B cell (primary cell): ENCODE measurements at regions of chr15 and their contacts with region 1.

Region 1: GRCh38 chr15:59688841-59689625 is at the start of gene BNIP2:
- DNase-seq: peak; percentile 99
- ATAC-seq: peak; percentile 89
- H3K4me3 ChIP-seq: peak within 1 kb of the TSS; percentile 66 to 99 (median 97)
- H3K4me3 Mint-ChIP-seq: peak within 1 kb of the TSS; percentile 89
- H3K27ac ChIP-seq: peak within 1 kb of the TSS; percentile 93 to 98
- H3K27ac Mint-ChIP-seq: peak within 1 kb of the TSS; percentile 98
- H3K4me1 ChIP-seq: peaks cover 43% of the 10 kb centered on the region in 2 donors
- H3K4me1 Mint-ChIP-seq: peaks cover 48% of the 10 kb centered on the region
- H3K27me3 ChIP-seq: no peaks in the 10 kb centered on the region
- H3K27me3 Mint-ChIP-seq: no peaks in the 10 kb centered on the region
- CTCF ChIP-seq: no peak
- total RNA-seq, gene BNIP2: 91.2 and 112 TPM in 2 replicates

Region 2: DNA sequence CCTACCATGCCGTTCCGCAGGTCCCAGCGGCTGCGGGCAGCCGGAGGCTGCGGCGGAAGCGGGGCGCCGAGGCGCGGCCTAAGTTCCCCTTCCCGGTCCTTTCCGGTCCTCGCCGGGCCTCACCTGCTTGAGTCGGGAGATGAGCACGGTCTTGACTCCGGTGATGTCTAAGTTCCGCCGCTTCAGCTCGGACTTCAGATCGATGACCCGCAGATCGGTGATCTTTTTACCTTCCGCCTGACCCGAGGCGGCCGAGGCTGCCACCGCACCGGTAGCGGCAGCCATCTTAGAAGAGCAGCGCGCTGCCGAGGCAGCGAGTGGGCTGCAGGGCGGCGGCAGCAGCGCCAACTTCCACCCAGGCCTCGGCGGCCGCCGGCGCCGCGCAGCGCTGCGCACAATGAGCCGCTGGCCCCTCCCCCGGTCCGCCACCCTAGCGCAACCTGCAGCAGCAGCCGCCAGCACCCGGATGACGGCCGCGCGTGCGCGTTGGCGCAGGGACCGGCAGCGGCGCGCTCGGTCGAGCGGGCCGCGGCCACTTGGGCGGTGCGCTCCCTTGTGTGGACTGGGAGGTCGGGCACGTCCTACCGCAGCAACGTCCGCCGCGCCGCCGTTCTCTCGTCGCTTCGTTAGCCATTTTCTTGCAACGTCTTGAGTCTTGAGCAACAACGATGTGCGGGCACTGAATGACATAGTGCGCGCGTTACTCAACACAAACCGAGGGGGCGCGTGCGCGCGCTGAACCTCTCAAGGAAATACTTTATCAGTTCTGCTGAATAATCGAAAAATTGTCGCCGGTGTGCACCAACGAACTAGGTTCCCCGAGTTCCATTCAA is 755.5 kb before region 1 on chr15 and contains the start of gene SLTM:
- CTCF ChIA-PET with region 1: no interaction called
- POLR2A ChIA-PET with region 1: no interaction called
- intact Hi-C with region 1: loop called (anchors 2 kb)
- DNase-seq: peak; percentile 98
- ATAC-seq: peak; percentile 91
- H3K4me3 ChIP-seq: peak within 1 kb of the TSS; percentile 80 to 97 (median 90)
- H3K4me3 Mint-ChIP-seq: peak within 1 kb of the TSS; percentile 95
- H3K27ac ChIP-seq: peak within 1 kb of the TSS; percentile 97 to 98
- H3K27ac Mint-ChIP-seq: peak within 1 kb of the TSS; percentile 97
- H3K4me1 ChIP-seq: peaks cover 19 to 20% of the 10 kb centered on the region in 2 donors
- H3K4me1 Mint-ChIP-seq: peaks cover 29% of the 10 kb centered on the region
- H3K27me3 ChIP-seq: no peaks in the 10 kb centered on the region
- H3K27me3 Mint-ChIP-seq: no peaks in the 10 kb centered on the region
- CTCF ChIP-seq: peak; percentile 42
- total RNA-seq, gene SLTM: 183 and 188 TPM in 2 replicates

Region 3: DNA sequence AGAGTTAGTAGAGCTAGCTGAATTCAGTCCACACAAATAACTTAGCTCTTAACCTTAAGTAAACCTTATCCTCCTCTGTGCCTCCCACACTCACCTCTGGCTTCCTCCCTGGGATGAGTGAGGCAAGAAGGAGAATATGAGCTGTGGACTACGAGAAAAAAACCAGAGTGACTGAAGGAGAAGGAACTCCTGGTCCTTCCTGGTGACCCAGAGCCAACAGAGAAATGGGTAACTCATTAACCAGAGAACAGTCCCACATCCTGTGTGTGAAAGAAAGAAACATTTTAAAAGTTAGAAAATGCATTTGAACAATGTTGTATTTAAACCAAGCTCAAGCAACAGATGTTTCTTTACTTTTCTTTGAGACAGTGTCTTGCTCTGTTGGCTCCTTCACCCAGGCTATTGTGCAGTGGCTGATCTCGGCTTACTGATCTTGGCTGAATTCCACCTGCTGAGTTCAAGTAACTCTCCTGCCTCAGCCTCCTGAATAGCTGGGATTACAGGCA is 278.6 kb before region 1 on chr15:
- CTCF ChIA-PET with region 1: no interaction called
- POLR2A ChIA-PET with region 1: no interaction called
- intact Hi-C with region 1: no loop called
- DNase-seq: no peak
- ATAC-seq: no peak
- H3K4me3 ChIP-seq: no peak overlapping the region
- H3K4me3 Mint-ChIP-seq: peak overlapping the region; percentile 45
- H3K27ac ChIP-seq: peak overlapping the region; percentile 74 to 85
- H3K27ac Mint-ChIP-seq: peak overlapping the region; percentile 78
- H3K4me1 ChIP-seq: peaks cover 83 to 87% of the 10 kb centered on the region in 2 donors
- H3K4me1 Mint-ChIP-seq: peaks cover 81% of the 10 kb centered on the region
- H3K27me3 ChIP-seq: no peaks in the 10 kb centered on the region
- H3K27me3 Mint-ChIP-seq: no peaks in the 10 kb centered on the region
- CTCF ChIP-seq: no peak

Region 4: GRCh38 chr15:59473226-59473625 is 215.8 kb before region 1 on chr15:
- CTCF ChIA-PET with region 1: no interaction called
- POLR2A ChIA-PET with region 1: no interaction called
- intact Hi-C with region 1: no loop called
- DNase-seq: no peak
- ATAC-seq: no peak
- H3K4me3 ChIP-seq: no peak overlapping the region
- H3K4me3 Mint-ChIP-seq: no peak overlapping the region
- H3K27ac ChIP-seq: no peak overlapping the region
- H3K27ac Mint-ChIP-seq: no peak overlapping the region
- H3K4me1 ChIP-seq: no peaks in the 10 kb centered on the region
- H3K4me1 Mint-ChIP-seq: peaks cover 10% of the 10 kb centered on the region
- H3K27me3 ChIP-seq: no peaks in the 10 kb centered on the region
- H3K27me3 Mint-ChIP-seq: no peaks in the 10 kb centered on the region
- CTCF ChIP-seq: no peak

Region 5: DNA sequence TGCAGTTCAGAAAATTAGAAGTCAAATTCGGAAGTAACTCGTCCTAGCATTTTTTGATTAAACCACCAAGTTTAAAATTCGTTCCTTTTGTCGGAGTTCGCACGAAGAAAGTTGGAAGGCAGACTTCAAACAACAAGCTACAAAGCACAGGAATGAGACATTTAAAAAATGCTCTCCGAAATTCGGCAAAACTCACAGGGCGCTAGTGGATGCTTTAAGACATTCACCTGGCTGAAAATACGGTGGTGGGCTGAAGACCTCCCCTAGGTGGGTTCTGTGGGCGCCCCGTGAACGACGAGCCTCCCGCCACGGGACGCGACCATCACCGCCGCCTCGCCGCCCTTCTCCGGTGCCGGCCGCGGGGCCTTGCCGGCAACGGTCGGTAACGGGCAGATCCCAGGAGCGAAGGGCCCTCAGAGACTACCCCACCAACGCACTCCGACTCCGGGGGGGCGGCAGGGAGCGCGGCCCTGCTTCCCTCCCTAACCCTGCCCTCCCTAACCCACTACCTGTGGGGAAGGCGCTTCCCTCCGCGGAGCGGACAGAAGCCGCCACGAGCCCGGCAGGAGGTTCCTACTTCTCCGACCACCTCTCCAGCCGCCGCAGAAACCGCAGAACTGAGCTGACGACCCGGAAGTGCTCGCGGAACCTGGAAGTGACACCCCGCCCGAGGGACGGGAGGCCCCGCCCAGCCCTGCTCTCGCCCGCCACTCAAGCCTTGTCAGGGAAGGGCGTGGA is 32.0 kb before region 1 on chr15 and contains the start of gene GTF2A2:
- CTCF ChIA-PET with region 1: interaction called, 9 read pairs
- POLR2A ChIA-PET with region 1: interaction called, 5 read pairs
- intact Hi-C with region 1: loop called (anchors 1 kb)
- DNase-seq: peak; percentile 95
- ATAC-seq: peak; percentile 99
- H3K4me3 ChIP-seq: peak within 1 kb of the TSS; percentile 74 to 94 (median 92)
- H3K4me3 Mint-ChIP-seq: no peak within 1 kb of the TSS
- H3K27ac ChIP-seq: peak within 1 kb of the TSS; percentile 64 to 79
- H3K27ac Mint-ChIP-seq: peak within 1 kb of the TSS; percentile 86
- H3K4me1 ChIP-seq: peaks cover 19 to 27% of the 10 kb centered on the region in 2 donors
- H3K4me1 Mint-ChIP-seq: peaks cover 12% of the 10 kb centered on the region
- H3K27me3 ChIP-seq: no peaks in the 10 kb centered on the region
- H3K27me3 Mint-ChIP-seq: no peaks in the 10 kb centered on the region
- CTCF ChIP-seq: no peak
- total RNA-seq, gene GTF2A2: 39.7 and 41.5 TPM in 2 replicates

Region 6: DNA sequence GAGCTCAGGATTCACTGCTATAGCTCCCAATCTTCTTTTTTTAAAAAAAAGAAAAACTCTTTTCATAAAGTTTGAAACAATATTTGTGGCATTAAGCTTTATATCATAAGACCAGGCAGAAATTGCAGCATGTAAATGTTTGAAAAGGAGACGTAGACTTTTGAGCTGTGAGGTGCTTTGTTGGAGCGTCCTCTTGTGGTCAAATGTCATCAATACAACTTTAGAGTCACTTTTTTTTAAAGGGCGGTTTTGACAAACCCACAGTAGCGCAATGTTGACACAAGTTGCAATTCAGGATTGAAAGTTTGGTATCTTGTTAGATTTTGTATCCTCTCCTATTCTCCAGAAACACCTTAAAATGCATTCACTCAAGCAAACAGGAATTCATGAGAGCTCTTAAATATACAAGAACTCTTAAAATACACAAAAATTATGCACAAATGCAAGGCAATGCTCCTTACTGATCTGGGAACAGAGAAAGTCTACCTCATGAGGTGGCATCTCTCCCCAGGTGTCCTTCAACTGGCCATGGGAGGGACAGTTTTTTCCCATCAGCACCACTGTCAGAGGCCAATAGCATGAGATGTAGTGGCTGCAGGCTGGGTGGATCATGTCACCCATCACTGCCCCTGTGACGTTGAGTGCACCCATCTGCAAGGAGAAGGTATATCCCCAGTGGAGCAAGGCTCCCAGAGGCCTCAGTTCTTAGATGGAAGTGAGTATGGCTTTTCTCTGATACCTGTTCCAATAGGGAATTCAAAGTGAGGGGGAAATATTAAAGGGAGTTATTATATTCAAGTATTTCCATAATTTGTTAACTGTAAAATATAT is 638.0 kb after region 1 on chr15:
- CTCF ChIA-PET with region 1: interaction called, 17 read pairs
- POLR2A ChIA-PET with region 1: no interaction called
- intact Hi-C with region 1: loop called (anchors 2 kb)
- DNase-seq: peak; percentile 49
- ATAC-seq: no peak
- H3K4me3 ChIP-seq: no peak overlapping the region
- H3K4me3 Mint-ChIP-seq: no peak overlapping the region
- H3K27ac ChIP-seq: no peak overlapping the region
- H3K27ac Mint-ChIP-seq: no peak overlapping the region
- H3K4me1 ChIP-seq: no peaks in the 10 kb centered on the region
- H3K4me1 Mint-ChIP-seq: peaks cover 2% of the 10 kb centered on the region
- H3K27me3 ChIP-seq: peaks cover 0 to 19% (median 10%) of the 10 kb centered on the region in 4 experiments
- H3K27me3 Mint-ChIP-seq: peaks cover 40% of the 10 kb centered on the region
- CTCF ChIP-seq: peak; percentile 78

Region 7: GRCh38 chr15:60520825-60521368 is 831.9 kb after region 1 on chr15:
- CTCF ChIA-PET with region 1: interaction called, 23 read pairs
- POLR2A ChIA-PET with region 1: no interaction called
- intact Hi-C with region 1: loop called (anchors 1 kb)
- DNase-seq: peak; percentile 79
- ATAC-seq: peak; percentile 85
- H3K4me3 ChIP-seq: no peak overlapping the region
- H3K4me3 Mint-ChIP-seq: peak overlapping the region; percentile 40
- H3K27ac ChIP-seq: no peak overlapping the region
- H3K27ac Mint-ChIP-seq: no peak overlapping the region
- H3K4me1 ChIP-seq: peaks cover 8 to 9% of the 10 kb centered on the region in 2 donors
- H3K4me1 Mint-ChIP-seq: peaks cover 13% of the 10 kb centered on the region
- H3K27me3 ChIP-seq: no peaks in the 10 kb centered on the region
- H3K27me3 Mint-ChIP-seq: no peaks in the 10 kb centered on the region
- CTCF ChIP-seq: peak; percentile 98